CD8-positive, alpha-beta T cell (primary cell): ENCODE measurements at regions of chr12 and their contacts with region 1.

Region 1: GRCh38 chr12:103965590-103966504 is at the start of gene TDG:
- DNase-seq: peak; percentile 94 to 99 (median 97)
- ATAC-seq: peak; percentile 92
- H3K4me3 ChIP-seq: peak within 1 kb of the TSS; percentile 54 to 83
- H3K4me3 Mint-ChIP-seq: peak within 1 kb of the TSS; percentile 96
- H3K27ac ChIP-seq: peak within 1 kb of the TSS; percentile 79 to 92
- H3K27ac Mint-ChIP-seq: peak within 1 kb of the TSS; percentile 99
- H3K4me1 ChIP-seq: peaks cover 41% of the 10 kb centered on the region
- H3K4me1 Mint-ChIP-seq: peaks cover 59% of the 10 kb centered on the region
- H3K27me3 ChIP-seq: no peaks in the 10 kb centered on the region
- H3K27me3 Mint-ChIP-seq: no peaks in the 10 kb centered on the region
- CTCF ChIP-seq: no peak
- total RNA-seq, gene TDG: 30.5 to 36.8 TPM

Region 2: GRCh38 chr12:102119674-102120563 is 1845.9 kb before region 1 on chr12 and contains the starts of genes NUP37 and PARPBP:
- CTCF ChIA-PET with region 1: no interaction called
- POLR2A ChIA-PET with region 1: no interaction called
- intact Hi-C with region 1: loop called in 1 of 2 experiments (anchors 5 kb)
- DNase-seq: peak; percentile 86 to 95 (median 92)
- ATAC-seq: peak; percentile 86
- H3K4me3 ChIP-seq: peak within 1 kb of the TSS; percentile 65 to 91
- H3K4me3 Mint-ChIP-seq: peak within 1 kb of the TSS; percentile 85
- H3K27ac ChIP-seq: peak within 1 kb of the TSS; percentile 70 to 86
- H3K27ac Mint-ChIP-seq: peak within 1 kb of the TSS; percentile 95
- H3K4me1 ChIP-seq: peaks cover 14% of the 10 kb centered on the region
- H3K4me1 Mint-ChIP-seq: peaks cover 28% of the 10 kb centered on the region
- H3K27me3 ChIP-seq: no peaks in the 10 kb centered on the region
- H3K27me3 Mint-ChIP-seq: no peaks in the 10 kb centered on the region
- CTCF ChIP-seq: no peak
- total RNA-seq, gene NUP37: 8.8 to 11.3 TPM
- total RNA-seq, gene PARPBP: 1.8 to 2.4 TPM

Region 3: GRCh38 chr12:103884316-103884715 is 81.5 kb before region 1 on chr12:
- CTCF ChIA-PET with region 1: interaction called, 9 read pairs
- POLR2A ChIA-PET with region 1: no interaction called
- intact Hi-C with region 1: loop called in 1 of 2 experiments (anchors 5 kb)
- DNase-seq: peak; percentile 10 to 76 (median 43)
- ATAC-seq: peak; percentile 67
- H3K4me3 ChIP-seq: no peak overlapping the region
- H3K4me3 Mint-ChIP-seq: no peak overlapping the region
- H3K27ac ChIP-seq: no peak overlapping the region
- H3K27ac Mint-ChIP-seq: no peak overlapping the region
- H3K4me1 ChIP-seq: peaks cover 11% of the 10 kb centered on the region
- H3K4me1 Mint-ChIP-seq: peaks cover 32% of the 10 kb centered on the region
- H3K27me3 ChIP-seq: no peaks in the 10 kb centered on the region
- H3K27me3 Mint-ChIP-seq: no peaks in the 10 kb centered on the region
- CTCF ChIP-seq: peak; percentile 71

Region 4: GRCh38 chr12:103930034-103930786 is 35.6 kb before region 1 on chr12 and contains the start of gene HSP90B1:
- CTCF ChIA-PET with region 1: interaction called, 6 read pairs
- POLR2A ChIA-PET with region 1: interaction called, 68 read pairs
- intact Hi-C with region 1: loop called (anchors 1 kb)
- DNase-seq: peak; percentile 99 to 100 (median 99)
- ATAC-seq: peak; percentile 74
- H3K4me3 ChIP-seq: peak within 1 kb of the TSS; percentile 67 to 91
- H3K4me3 Mint-ChIP-seq: peak within 1 kb of the TSS; percentile 83
- H3K27ac ChIP-seq: peak within 1 kb of the TSS; percentile 96 to 98
- H3K27ac Mint-ChIP-seq: peak within 1 kb of the TSS; percentile 97
- H3K4me1 ChIP-seq: peaks cover 43% of the 10 kb centered on the region
- H3K4me1 Mint-ChIP-seq: peaks cover 64% of the 10 kb centered on the region
- H3K27me3 ChIP-seq: no peaks in the 10 kb centered on the region
- H3K27me3 Mint-ChIP-seq: no peaks in the 10 kb centered on the region
- CTCF ChIP-seq: no peak
- total RNA-seq, gene HSP90B1: 173 to 179 TPM

Region 5: DNA sequence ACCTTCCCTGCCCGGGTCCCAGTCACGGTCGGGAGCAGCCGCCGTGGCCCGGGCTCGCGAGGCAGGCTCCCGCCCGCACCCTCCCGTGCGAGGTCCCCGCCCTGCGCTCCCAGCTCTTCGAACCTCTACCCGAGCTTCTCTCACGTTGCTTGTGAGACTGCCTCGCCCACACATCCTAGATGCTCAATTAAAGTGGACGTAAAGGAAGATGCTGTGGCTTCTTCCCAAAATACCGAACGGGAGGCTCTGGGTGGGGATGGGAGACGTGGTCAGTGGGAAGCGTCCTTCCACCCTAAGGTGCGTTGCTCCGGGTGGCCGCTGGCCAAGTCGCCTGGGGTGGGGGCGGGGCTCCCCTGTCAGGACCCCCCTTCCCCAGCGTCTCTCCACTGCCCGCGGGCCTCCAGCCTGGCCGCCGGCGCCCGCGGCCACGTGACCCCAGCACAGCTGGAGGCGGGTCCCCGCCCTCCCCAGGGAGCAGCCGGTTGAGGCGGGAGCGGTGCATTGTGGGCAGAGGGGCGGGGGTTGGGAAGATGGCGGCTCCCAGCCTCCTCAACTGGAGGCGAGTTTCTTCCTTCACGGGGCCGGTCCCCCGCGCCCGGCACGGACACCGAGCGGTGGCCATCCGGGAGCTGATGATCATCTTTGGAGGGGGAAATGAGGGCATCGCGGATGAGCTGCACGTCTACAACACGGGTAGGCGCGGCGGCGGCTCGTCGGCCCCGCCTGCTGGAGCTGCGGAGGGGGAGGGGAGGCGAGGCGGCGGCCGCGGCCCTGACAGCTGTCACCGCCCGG is 98.4 kb after region 1 on chr12 and contains the start of gene HCFC2:
- CTCF ChIA-PET with region 1: interaction called, 4 read pairs
- POLR2A ChIA-PET with region 1: interaction called, 7 read pairs
- intact Hi-C with region 1: loop called (anchors 1 to 2 kb)
- DNase-seq: peak; percentile 71 to 92 (median 87)
- ATAC-seq: peak; percentile 92
- H3K4me3 ChIP-seq: peak within 1 kb of the TSS; percentile 75 to 98
- H3K4me3 Mint-ChIP-seq: peak within 1 kb of the TSS; percentile 95
- H3K27ac ChIP-seq: peak within 1 kb of the TSS; percentile 61 to 64
- H3K27ac Mint-ChIP-seq: peak within 1 kb of the TSS; percentile 93
- H3K4me1 ChIP-seq: peaks cover 7% of the 10 kb centered on the region
- H3K4me1 Mint-ChIP-seq: peaks cover 29% of the 10 kb centered on the region
- H3K27me3 ChIP-seq: peaks cover 0 to 3% of the 10 kb centered on the region in 2 experiments
- H3K27me3 Mint-ChIP-seq: peaks cover 4% of the 10 kb centered on the region
- CTCF ChIP-seq: no peak
- total RNA-seq, gene HCFC2: 13.9 to 16.7 TPM

Region 6: DNA sequence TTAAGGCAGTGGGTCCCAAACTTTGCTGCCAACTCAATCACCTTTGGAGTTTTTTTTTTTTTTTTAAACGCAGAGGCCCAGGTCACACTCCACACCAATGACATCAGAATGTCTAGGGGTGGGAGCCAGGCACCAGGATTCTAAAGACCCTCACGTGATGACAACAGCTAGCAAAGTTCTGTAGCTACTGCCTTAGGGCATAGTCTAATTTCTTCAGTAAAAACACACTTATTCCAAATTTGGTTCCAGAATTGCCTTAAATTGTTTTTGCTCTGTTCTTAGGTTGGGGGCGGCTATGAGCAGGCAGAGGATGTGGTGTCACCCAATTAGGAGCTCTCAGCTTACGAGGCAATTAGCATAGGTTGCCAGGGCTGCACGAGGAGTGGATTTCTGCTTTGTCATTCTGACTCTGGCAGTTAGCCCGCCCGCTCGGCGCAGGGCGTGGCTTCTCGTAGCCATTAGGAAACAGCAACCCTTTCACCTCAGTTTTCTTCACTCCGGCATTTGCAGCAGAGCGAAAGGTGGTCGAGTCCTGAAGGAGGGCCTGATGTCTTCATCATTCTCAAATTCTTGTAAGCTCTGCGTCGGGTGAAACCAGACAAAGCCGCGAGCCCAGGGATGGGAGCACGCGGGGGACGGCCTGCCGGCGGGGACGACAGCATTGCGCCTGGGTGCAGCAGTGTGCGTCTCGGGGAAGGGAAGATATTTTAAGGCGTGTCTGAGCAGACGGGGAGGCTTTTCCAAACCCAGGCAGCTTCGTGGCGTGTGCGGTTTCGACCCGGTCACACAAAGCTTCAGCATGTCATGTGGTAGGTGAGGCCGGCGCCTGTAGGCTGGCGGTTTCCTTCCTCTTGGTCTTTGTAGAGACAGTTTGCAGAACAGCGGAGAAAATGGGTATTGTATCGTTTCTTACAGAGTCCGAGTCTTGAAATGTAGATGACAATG is 321.0 kb after region 1 on chr12:
- CTCF ChIA-PET with region 1: no interaction called
- POLR2A ChIA-PET with region 1: interaction called, 3 read pairs
- intact Hi-C with region 1: loop called (anchors 5 to 10 kb)
- DNase-seq: peak; percentile 75 to 95 (median 88)
- ATAC-seq: peak; percentile 87
- H3K4me3 ChIP-seq: peak overlapping the region; percentile 80 to 86
- H3K4me3 Mint-ChIP-seq: peak overlapping the region; percentile 97
- H3K27ac ChIP-seq: peak overlapping the region; percentile 64 to 90
- H3K27ac Mint-ChIP-seq: peak overlapping the region; percentile 96
- H3K4me1 ChIP-seq: peaks cover 24% of the 10 kb centered on the region
- H3K4me1 Mint-ChIP-seq: peaks cover 35% of the 10 kb centered on the region
- H3K27me3 ChIP-seq: no peaks in the 10 kb centered on the region
- H3K27me3 Mint-ChIP-seq: no peaks in the 10 kb centered on the region
- CTCF ChIP-seq: no peak

Region 7: DNA sequence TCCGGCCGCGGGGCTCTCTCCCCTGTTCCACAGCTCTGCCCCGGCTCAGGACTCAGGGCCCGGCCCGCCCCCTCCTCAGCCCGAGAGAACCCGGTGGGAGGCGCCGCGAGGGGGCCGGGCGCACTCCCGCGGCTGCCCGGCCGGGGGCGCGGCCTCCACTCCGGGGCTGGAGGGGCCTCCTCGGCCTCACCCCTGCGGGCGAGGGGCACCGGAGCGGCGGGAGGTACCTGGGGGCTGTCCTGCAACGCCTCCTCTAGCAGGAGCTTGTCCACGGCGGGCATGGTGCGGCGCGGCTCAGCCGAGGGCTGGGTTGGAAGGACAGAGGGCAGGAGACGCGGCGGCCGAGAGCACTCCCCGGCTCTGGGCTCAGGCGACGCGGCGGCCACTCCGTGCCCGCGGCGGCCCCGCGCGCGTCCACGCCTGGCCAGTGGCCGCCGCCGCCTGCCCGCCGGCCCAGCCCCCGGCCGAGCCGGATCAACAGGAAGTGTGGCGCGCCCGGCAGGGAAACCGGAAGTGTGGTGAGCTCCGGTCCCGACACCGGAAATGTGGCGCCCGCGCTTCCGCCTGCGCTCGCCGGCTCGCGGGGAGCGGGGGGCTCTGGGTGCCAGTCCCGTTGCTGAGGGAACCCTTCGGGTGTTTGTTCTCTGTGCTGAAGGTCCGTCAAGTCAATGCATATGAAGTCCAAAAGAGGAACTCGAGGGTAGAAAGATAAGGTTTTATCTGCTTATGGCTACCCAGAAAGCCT is 1270.1 kb after region 1 on chr12 and contains the start of gene APPL2:
- CTCF ChIA-PET with region 1: no interaction called
- POLR2A ChIA-PET with region 1: no interaction called
- intact Hi-C with region 1: loop called (anchors 5 kb)
- DNase-seq: peak; percentile 62 to 91 (median 82)
- ATAC-seq: peak; percentile 73
- H3K4me3 ChIP-seq: peak within 1 kb of the TSS; percentile 75 to 77
- H3K4me3 Mint-ChIP-seq: peak within 1 kb of the TSS; percentile 93
- H3K27ac ChIP-seq: peak within 1 kb of the TSS; percentile 79 to 87
- H3K27ac Mint-ChIP-seq: peak within 1 kb of the TSS; percentile 97
- H3K4me1 ChIP-seq: peaks cover 36% of the 10 kb centered on the region
- H3K4me1 Mint-ChIP-seq: peaks cover 51% of the 10 kb centered on the region
- H3K27me3 ChIP-seq: no peaks in the 10 kb centered on the region
- H3K27me3 Mint-ChIP-seq: no peaks in the 10 kb centered on the region
- CTCF ChIP-seq: no peak
- total RNA-seq, gene APPL2: 53.1 to 60.6 TPM